ENCODE measurements at regions of chr9 and their contacts with region 1.

Region 1: GRCh38 chr9:130997925-130998596 is 10.9 kb upstream of the LAMC3 start:
- DNase-seq: peak; percentile 96
- H3K4me3 ChIP-seq: no peak overlapping the region; a peak in 1 of 4 replicates
- H3K27ac ChIP-seq: no peak overlapping the region
- H3K4me1 ChIP-seq: peaks cover 2 to 6% of the 10 kb centered on the region in 2 experiments; a peak in 1 of 4 replicates
- H3K27me3 ChIP-seq: peaks cover 21% of the 10 kb centered on the region; the same call in 1 of the 2 replicates
- CTCF ChIP-seq: peak; percentile 85
- EP300 ChIP-seq: no peak
- RAD21 ChIP-seq: peak; percentile 80

Region 2: GRCh38 chr9:130707225-130707976 is 290.7 kb before region 1 on chr9:
- CTCF ChIA-PET with region 1: interaction called, 18 read pairs
- POLR2A ChIA-PET with region 1: no interaction called
- DNase-seq: peak; percentile 34
- H3K4me3 ChIP-seq: no peak overlapping the region; a peak in 1 of 4 replicates
- H3K27ac ChIP-seq: peak overlapping the region in 1 of 2 experiments; percentile 8; a peak in 1 of 4 replicates
- H3K4me1 ChIP-seq: no peaks in the 10 kb centered on the region
- H3K27me3 ChIP-seq: no peaks in the 10 kb centered on the region
- CTCF ChIP-seq: peak; percentile 94
- EP300 ChIP-seq: no peak
- RAD21 ChIP-seq: peak; percentile 77

Region 3: DNA sequence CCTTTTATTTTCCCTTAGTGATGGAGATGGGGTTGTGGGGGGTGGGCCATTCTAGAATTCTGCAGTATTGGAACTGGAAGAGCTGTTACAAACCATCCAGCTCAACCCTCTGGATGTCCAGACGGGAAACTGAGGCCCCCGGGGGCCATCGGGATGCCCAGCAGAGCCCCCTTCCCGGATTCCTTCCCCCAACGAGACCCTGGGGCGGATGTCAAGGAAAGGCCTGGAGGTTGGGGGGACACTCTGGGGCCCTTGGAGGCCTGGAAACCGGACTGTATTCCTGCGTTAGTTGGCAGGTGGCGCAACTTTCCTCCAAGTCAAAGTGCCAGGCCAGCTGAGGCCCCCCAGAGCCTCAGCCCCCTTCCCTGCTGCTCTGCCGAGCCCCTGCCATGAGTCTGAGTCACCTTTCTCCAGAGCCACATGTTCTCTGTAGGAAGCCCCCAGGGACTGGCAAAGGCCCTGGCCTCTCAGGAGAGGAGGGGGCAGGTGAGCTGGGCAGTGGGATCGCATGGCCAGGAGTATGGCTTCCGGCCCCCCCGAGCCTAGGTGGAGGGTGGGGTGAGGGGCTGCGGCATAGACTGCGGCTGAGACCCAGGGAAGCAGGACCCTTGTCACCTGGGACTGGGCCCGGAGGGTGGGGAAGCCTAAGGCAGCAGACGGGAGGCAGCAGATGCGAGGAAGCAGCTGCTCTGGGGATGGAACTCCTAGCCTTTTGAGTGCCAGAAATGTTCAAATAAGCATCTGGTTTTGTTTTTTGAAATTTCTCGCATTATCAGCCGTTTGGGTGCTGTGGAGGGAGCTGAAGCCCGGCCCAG is 41.2 kb before region 1 on chr9:
- CTCF ChIA-PET with region 1: interaction called, 13 read pairs
- POLR2A ChIA-PET with region 1: no interaction called
- DNase-seq: no peak
- H3K4me3 ChIP-seq: no peak overlapping the region
- H3K27ac ChIP-seq: no peak overlapping the region; a peak in 1 of 4 replicates
- H3K4me1 ChIP-seq: peaks cover 0 to 6% of the 10 kb centered on the region in 2 experiments; a peak in 1 of 4 replicates
- H3K27me3 ChIP-seq: 0 out of 2 replicates have a peak, but pooled peaks cover 11% of the 10 kb centered on the region
- CTCF ChIP-seq: no peak
- EP300 ChIP-seq: no peak
- RAD21 ChIP-seq: no peak

Region 4: DNA sequence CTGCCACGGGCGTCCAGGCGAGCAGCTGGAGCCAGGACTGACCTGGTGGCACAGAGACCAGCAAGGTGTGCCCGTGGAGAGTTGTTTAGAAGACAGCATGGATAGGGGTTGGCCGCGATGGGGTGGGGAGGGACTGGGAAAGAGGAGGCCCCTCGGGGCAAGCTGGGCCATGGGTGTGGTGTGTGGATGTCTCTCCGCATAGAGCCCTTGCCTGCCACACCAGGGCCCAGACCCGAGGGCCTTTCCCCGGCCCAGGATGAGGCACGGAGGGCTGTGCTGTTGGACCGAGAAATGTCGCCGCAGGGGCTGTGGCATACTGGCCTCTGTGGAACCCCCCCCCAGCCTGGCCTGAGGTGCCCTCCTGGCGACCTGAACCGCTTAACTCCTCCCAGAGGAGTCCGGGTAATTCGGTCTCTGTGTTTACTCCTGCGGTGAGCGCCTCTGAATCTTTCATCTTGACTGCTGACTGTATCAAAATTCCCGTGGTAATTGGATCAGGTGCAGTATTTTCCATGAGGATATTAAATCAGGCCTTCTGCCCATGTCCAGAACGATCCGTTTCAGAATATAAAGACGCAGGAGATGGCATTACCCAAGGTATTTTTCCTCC is 11.6 kb before region 1 on chr9:
- CTCF ChIA-PET with region 1: interaction called, 32 read pairs
- POLR2A ChIA-PET with region 1: no interaction called
- DNase-seq: no peak
- H3K4me3 ChIP-seq: no peak overlapping the region
- H3K27ac ChIP-seq: no peak overlapping the region
- H3K4me1 ChIP-seq: no peaks in the 10 kb centered on the region
- H3K27me3 ChIP-seq: 0 out of 2 replicates have a peak, but pooled peaks cover 7% of the 10 kb centered on the region
- CTCF ChIP-seq: no peak
- EP300 ChIP-seq: no peak
- RAD21 ChIP-seq: no peak

Region 5: GRCh38 chr9:131018621-131019020 is 20.6 kb after region 1 on chr9:
- CTCF ChIA-PET with region 1: interaction called, 10 read pairs
- POLR2A ChIA-PET with region 1: no interaction called
- DNase-seq: no peak
- H3K4me3 ChIP-seq: no peak overlapping the region
- H3K27ac ChIP-seq: no peak overlapping the region
- H3K4me1 ChIP-seq: no peaks in the 10 kb centered on the region
- H3K27me3 ChIP-seq: peaks cover 14% of the 10 kb centered on the region; the same call in 1 of the 2 replicates
- CTCF ChIP-seq: peak; percentile 25; the same call in 1 of the 2 replicates
- EP300 ChIP-seq: no peak
- RAD21 ChIP-seq: no peak